Naive thymus-derived CD4-positive, alpha-beta T cell (primary cell): ENCODE measurements at regions of chr14 and their contacts with region 1.

Region 1: DNA sequence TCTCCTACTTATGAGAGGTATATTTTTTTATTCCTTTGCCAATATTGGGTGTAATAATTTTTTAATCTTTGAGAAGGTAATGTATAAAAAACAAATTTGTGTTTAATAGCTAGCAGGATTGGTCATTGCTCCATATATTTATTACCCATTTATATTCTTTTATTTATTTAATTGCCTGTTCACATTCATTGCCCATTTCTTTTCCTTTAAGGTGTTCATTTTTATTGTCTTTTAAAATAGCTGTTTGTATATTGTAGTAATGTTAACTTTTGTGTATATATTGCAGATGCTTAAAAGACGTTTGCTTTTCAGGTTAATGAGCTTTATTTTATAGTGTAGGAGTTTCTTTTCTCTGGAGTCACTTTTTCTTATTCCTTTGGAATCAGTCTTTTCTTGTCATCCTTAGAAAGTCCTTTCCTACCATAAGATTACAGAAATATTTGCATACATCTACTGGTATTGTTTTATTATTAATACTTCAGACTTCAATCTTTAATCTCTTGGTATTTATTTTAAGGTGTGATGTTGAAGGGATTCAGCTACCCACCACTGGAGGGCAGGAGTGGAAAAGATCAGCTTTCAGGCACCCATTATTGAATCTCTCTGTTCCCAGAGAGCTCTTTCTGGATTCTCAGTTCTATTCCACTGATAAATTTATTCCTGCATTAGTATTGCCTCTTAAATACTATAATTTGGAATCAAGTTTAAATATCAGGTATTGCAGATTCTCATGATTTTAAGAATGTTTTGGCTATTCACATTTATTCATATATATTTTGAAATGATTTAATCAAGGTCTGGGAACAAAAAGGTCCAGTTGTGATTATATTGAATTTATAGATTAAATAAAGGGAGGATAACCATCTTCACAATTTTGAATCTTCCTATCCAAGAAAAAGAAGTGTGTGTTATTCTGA is 17.3 kb downstream of the PPM1A start:
- DNase-seq: peak in 4 of 9 donors; percentile 12 to 22 (median 16)
- ATAC-seq: peak; percentile 70
- H3K4me3 ChIP-seq: no peak overlapping the region
- H3K4me3 Mint-ChIP-seq: no peak overlapping the region
- H3K27ac ChIP-seq: no peak overlapping the region
- H3K27ac Mint-ChIP-seq: no peak overlapping the region
- H3K4me1 ChIP-seq: peaks cover under 1 to 3% of the 10 kb centered on the region in 2 donors
- H3K4me1 Mint-ChIP-seq: peaks cover 10 to 68% (median 53%) of the 10 kb centered on the region in 7 donors
- H3K27me3 ChIP-seq: no peaks in the 10 kb centered on the region
- H3K27me3 Mint-ChIP-seq: no peaks in the 10 kb centered on the region

Region 2: GRCh38 chr14:60195179-60195810 is 71.0 kb before region 1 on chr14:
- CTCF ChIA-PET with region 1: interaction called, 3 read pairs
- POLR2A ChIA-PET with region 1: no interaction called
- intact Hi-C with region 1: loop called in 1 of 2 experiments (anchors 1 kb)
- DNase-seq: peak in 4 of 9 donors; percentile 13 to 31 (median 22)
- ATAC-seq: peak; percentile 60
- H3K4me3 ChIP-seq: no peak overlapping the region
- H3K4me3 Mint-ChIP-seq: no peak overlapping the region
- H3K27ac ChIP-seq: no peak overlapping the region
- H3K27ac Mint-ChIP-seq: no peak overlapping the region
- H3K4me1 ChIP-seq: no peaks in the 10 kb centered on the region
- H3K4me1 Mint-ChIP-seq: peaks cover 0 to 5% (median 0%) of the 10 kb centered on the region in 7 donors
- H3K27me3 ChIP-seq: no peaks in the 10 kb centered on the region
- H3K27me3 Mint-ChIP-seq: peaks cover 3 to 20% (median 10%) of the 10 kb centered on the region in 5 donors

Region 3: DNA sequence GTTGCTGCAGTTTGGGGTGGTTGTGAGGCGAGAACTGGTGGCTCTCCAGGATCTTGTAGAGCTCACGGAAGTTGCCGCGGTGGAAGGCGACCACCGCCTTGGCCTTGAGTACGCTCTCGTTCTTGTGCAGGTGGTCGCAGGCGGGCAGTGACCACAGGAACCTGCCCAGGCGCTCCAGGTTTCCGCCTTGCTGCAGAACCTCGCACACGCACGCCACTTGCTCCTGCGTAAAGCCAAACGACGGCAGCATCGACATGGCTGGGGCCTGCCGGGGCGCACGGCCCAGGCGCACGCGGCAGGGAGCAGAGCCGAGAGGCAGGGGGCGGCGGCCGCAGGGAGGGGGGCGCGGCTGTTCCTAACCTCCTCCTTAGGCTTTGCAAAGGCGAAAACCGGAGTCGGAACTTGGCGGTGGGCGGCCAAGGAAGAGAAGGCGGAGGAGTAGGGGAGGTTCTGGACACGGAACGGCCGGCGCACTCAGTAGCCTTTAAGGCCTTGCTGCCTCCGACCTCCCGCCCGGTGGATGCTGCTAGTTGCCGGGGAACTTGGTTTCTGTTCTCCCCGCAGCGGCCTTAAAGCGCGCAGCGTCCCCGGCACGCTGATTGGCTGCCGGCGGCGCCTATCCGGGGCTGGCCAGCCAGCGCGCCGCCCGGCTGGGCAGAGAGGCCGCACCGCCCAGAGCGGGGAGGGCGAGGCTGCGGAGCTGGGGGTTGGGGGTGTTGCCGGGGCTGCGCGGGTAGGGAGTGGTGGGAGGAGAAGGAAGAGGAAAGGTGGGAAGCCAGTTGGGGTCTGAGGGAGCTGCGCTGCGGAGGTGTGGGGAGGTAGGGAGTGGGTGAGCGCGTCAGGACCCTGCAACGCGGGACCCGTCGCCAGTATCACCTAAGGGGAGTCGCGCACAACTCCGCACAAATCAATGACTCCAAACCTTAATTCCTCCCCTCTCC is 382.9 kb after region 1 on chr14 and contains the start of gene SIX1:
- CTCF ChIA-PET with region 1: no interaction called
- POLR2A ChIA-PET with region 1: no interaction called
- intact Hi-C with region 1: no loop called
- DNase-seq: peak in 1 of 9 donors; percentile 42
- ATAC-seq: peak; percentile 46
- H3K4me3 ChIP-seq: no peak within 1 kb of the TSS
- H3K4me3 Mint-ChIP-seq: peak within 1 kb of the TSS in 9 of 10 donors; percentile 58 to 79 (median 71)
- H3K27ac ChIP-seq: no peak within 1 kb of the TSS
- H3K27ac Mint-ChIP-seq: peak within 1 kb of the TSS in 1 of 9 donors; percentile 76
- H3K4me1 ChIP-seq: peaks cover 8 to 17% of the 10 kb centered on the region in 2 donors
- H3K4me1 Mint-ChIP-seq: peaks cover 26 to 66% (median 54%) of the 10 kb centered on the region in 7 donors
- H3K27me3 ChIP-seq: peaks cover 7 to 49% of the 10 kb centered on the region in 2 donors
- H3K27me3 Mint-ChIP-seq: peaks cover 81 to 94% (median 85%) of the 10 kb centered on the region in 5 donors
- total RNA-seq, gene SIX1: 0.70 TPM in 1 of 5 experiments, not detected in the others